AG04449 (cell line): ENCODE measurements at regions of chr1 and their contacts with region 1.

Region 1: DNA sequence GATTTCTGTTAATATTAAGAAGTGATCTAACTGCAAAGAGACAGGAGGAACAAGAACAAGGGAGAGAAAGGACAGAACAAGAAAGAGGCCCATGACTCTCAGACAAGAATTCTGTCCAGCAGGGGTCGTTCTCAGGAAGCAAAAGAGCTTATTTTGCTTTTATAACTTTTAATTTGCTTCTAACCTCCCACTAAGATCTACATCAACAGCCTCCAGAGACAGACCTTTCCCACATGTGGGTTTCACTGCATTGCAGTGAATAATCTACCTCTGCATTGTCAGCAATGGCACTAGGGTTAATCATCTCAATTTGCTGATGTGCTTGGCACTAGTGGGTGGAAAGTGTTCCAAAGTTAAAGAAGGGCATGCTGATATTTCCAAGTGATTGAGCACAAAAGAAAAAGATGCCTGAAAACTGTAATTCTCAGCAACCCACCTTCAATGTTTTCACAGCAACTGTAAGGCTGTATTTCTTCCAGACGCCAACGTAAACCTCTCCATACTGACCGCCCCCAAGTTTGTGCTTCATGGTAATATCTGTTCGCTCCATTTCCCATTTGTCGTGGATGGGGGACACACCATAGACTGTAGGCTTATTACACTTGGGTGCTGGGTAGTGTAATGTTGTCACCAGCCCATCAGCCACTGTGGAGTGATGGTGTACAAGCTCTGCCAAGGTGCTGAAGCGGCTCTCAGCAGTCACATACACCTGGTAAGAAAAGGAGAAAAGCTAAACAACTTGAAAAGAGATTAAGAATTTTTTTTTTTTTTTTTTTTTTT is 39.5 kb downstream of the TOR3A start:
- DNase-seq: peak; percentile 21
- H3K4me3 ChIP-seq: no peak overlapping the region
- CTCF ChIP-seq: peak; percentile 64

Region 2: GRCh38 chr1:178976541-178976940 is 144.8 kb before region 1 on chr1:
- CTCF ChIA-PET with region 1: no interaction called
- POLR2A ChIA-PET with region 1: no interaction called
- DNase-seq: no peak
- H3K4me3 ChIP-seq: no peak overlapping the region
- CTCF ChIP-seq: no peak

Region 3: DNA sequence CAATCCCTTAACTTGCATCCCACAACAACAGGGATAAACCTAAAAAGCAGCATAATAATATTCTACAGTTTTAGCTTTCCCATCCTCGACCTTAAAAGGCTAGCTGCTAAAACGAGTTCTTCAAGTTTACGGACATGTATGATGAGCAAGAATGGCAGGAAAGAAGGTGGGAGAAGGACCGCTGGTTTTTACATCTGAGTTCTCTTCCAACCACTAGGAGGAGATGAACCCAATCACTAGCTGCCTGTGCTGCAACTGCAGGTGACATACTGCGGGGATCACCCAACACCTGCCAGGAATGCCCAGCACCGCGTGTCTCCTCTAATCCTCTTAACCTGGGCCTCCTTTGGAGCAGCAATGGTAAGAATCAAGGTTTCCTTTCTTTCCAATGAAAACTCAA is 16.0 kb before region 1 on chr1:
- CTCF ChIA-PET with region 1: interaction called, 32 read pairs
- POLR2A ChIA-PET with region 1: no interaction called
- DNase-seq: no peak
- H3K4me3 ChIP-seq: no peak overlapping the region
- CTCF ChIP-seq: peak; percentile 32

Region 4: DNA sequence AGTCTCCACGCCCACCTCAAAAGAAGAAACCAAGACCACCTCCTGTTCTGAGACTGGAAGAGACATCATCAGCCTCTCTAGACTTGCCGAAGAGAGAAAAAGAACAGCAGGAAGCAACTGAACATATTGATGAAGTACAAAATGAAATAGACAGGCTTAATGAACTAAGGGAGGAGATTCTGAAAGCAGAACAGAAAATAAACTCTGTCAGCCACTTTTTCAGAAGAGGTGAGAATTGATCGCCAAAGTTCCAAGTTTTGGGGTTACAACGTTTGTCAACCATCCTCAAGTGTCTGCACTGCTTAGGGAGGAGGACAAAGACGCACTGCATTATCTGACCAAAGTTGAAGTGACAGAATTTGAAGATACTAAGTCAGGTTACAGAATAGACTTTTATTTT is 62.5 kb after region 1 on chr1:
- CTCF ChIA-PET with region 1: interaction called, 14 read pairs
- POLR2A ChIA-PET with region 1: no interaction called
- DNase-seq: no peak
- H3K4me3 ChIP-seq: no peak overlapping the region
- CTCF ChIP-seq: no peak

Region 5: DNA sequence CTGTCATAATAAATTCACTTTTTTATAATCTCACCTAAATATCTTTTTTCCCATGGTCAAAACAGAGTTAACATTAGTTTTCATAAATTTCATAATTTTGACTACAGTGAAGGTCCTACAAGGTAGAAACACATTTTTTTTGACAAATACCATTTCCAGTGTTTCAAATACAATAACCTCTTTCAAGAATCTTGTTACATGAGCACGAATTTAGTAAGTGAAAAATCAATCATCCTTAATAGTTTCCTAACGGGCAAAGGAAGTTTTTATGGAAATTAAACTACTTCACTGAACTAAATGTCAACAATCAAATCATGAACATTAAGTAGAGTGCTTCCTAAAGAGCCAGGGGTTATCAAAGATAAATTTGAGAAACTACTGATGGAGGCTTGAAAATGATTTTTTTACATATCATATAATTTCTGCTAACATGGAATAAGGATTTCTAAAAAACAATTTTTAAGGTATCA is 72.8 kb after region 1 on chr1:
- CTCF ChIA-PET with region 1: interaction called, 74 read pairs
- POLR2A ChIA-PET with region 1: no interaction called
- DNase-seq: no peak
- H3K4me3 ChIP-seq: no peak overlapping the region
- CTCF ChIP-seq: no peak

Region 6: DNA sequence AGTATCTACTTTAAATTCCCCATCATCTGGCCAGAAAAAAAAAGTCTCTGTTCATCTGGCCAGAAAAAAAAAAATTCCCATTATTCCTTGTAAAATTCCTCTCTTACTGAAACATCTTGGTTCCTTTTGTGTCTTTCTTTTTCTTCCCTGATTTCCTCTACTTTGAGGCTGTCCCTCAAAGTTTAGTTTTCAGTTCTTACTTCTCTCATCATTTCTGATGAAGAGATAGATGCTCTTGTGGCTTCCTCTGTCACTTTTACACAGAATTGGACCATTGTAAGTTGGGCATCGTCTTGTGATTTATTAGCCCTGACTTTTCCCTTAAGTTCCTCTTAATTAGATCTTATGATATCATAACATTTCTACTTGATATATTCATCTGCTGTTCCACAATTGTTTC is 178.8 kb after region 1 on chr1:
- CTCF ChIA-PET with region 1: no interaction called
- POLR2A ChIA-PET with region 1: no interaction called
- DNase-seq: no peak
- H3K4me3 ChIP-seq: no peak overlapping the region
- CTCF ChIP-seq: no peak

Region 7: DNA sequence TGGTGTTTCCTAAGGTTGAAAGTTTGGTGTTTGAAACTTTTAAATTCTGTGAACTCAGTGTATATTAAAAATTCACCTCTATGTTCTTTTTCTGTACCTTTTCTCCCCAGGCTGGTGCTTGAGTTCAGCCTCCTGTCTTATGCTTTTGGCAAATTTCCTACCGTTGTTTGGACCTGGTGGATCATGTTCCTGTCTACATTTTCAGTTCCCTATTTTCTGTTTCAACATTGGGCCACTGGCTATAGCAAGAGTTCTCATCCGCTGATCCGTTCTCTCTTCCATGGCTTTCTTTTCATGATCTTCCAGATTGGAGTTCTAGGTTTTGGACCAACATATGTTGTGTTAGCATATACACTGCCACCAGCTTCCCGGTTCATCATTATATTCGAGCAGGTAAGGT is 219.6 kb after region 1 on chr1:
- CTCF ChIA-PET with region 1: no interaction called
- POLR2A ChIA-PET with region 1: no interaction called
- DNase-seq: no peak
- H3K4me3 ChIP-seq: no peak overlapping the region
- CTCF ChIP-seq: no peak

Region 8: GRCh38 chr1:179365320-179366092 is 244.2 kb after region 1 on chr1 and contains the start of gene AXDND1:
- CTCF ChIA-PET with region 1: interaction called, 10 read pairs
- POLR2A ChIA-PET with region 1: no interaction called
- DNase-seq: no peak
- H3K4me3 ChIP-seq: peak within 1 kb of the TSS; percentile 84
- CTCF ChIP-seq: no peak